K562 (cell line): ENCODE measurements at regions of chr2 and their contacts with region 1.

Region 1: GRCh38 chr2:196076778-196077568 is 8.3 kb upstream of the DNAH7 start:
- DNase-seq: no peak
- ATAC-seq: peak; percentile 46
- H3K4me3 ChIP-seq: no peak overlapping the region
- H3K27ac ChIP-seq: no peak overlapping the region
- H3K4me1 ChIP-seq: no peaks in the 10 kb centered on the region
- H3K27me3 ChIP-seq: no peaks in the 10 kb centered on the region
- CTCF ChIP-seq: no peak
- EP300 ChIP-seq: no peak
- POLR2A ChIP-seq: no peak
- RAD21 ChIP-seq: no peak

Region 2: GRCh38 chr2:196046123-196046917 is 30.7 kb before region 1 on chr2:
- CTCF ChIA-PET with region 1: no interaction called
- POLR2A ChIA-PET with region 1: no interaction called
- in situ Hi-C with region 1: no loop called
- intact Hi-C with region 1: no loop called
- DNase-seq: no peak
- ATAC-seq: peak; percentile 57
- H3K4me3 ChIP-seq: no peak overlapping the region
- H3K27ac ChIP-seq: no peak overlapping the region; the same call in 2 of the 3 replicates
- H3K4me1 ChIP-seq: no peaks in the 10 kb centered on the region; a peak in 1 of 5 replicates
- H3K27me3 ChIP-seq: no peaks in the 10 kb centered on the region
- CTCF ChIP-seq: no peak
- EP300 ChIP-seq: no peak
- POLR2A ChIP-seq: no peak
- RAD21 ChIP-seq: no peak

Region 3: DNA sequence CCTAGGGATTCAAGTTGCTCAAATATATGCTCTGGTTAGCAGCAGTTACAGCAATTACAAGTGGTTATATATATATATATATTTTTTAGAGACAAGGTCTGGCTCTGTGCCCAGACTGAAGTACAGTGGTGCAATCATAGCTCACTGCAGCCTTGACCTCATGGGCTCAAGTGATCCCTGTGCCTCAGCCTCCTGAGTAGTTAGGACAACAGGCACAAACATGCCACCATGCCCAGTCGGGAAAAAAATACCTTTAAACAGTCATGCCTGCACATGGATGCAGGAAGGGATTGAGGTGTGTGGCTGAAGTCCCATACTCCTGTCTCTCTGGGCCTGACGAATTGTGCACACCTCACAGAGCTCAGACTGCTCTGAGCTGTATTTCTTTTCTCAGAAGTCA is 11.2 kb after region 1 on chr2:
- CTCF ChIA-PET with region 1: no interaction called
- POLR2A ChIA-PET with region 1: no interaction called
- in situ Hi-C with region 1: no loop called
- intact Hi-C with region 1: no loop called
- DNase-seq: no peak
- ATAC-seq: no peak
- H3K4me3 ChIP-seq: no peak overlapping the region
- H3K27ac ChIP-seq: no peak overlapping the region
- H3K4me1 ChIP-seq: no peaks in the 10 kb centered on the region
- H3K27me3 ChIP-seq: no peaks in the 10 kb centered on the region
- CTCF ChIP-seq: no peak
- EP300 ChIP-seq: no peak
- POLR2A ChIP-seq: no peak
- RAD21 ChIP-seq: no peak

Region 4: GRCh38 chr2:196171248-196171871 is 94.4 kb after region 1 on chr2 and contains the start of gene STK17B:
- CTCF ChIA-PET with region 1: no interaction called
- POLR2A ChIA-PET with region 1: no interaction called
- in situ Hi-C with region 1: no loop called
- intact Hi-C with region 1: loop called (anchors 5 kb)
- DNase-seq: peak; percentile 93 to 97 (median 96)
- ATAC-seq: peak; percentile 87
- H3K4me3 ChIP-seq: peak within 1 kb of the TSS; percentile 87
- H3K27ac ChIP-seq: peak within 1 kb of the TSS; percentile 91
- H3K4me1 ChIP-seq: peaks cover 12 to 26% of the 10 kb centered on the region in 2 experiments; a peak in 4 of 5 replicates
- H3K27me3 ChIP-seq: no peaks in the 10 kb centered on the region
- CTCF ChIP-seq: peak in 2 of 3 experiments; percentile 21 to 28; a peak in 2 of 6 replicates
- EP300 ChIP-seq: no peak
- POLR2A ChIP-seq: peak; percentile 93
- RAD21 ChIP-seq: no peak; a peak in 1 of 4 replicates
- polyA plus RNA-seq, gene STK17B: 2.3 to 3.0 TPM

Region 5: GRCh38 chr2:196291873-196292800 is 215.2 kb after region 1 on chr2:
- CTCF ChIA-PET with region 1: no interaction called
- POLR2A ChIA-PET with region 1: no interaction called
- in situ Hi-C with region 1: no loop called
- intact Hi-C with region 1: loop called (anchors 5 kb)
- DNase-seq: no peak
- ATAC-seq: no peak
- H3K4me3 ChIP-seq: no peak overlapping the region
- H3K27ac ChIP-seq: no peak overlapping the region
- H3K4me1 ChIP-seq: no peaks in the 10 kb centered on the region
- H3K27me3 ChIP-seq: no peaks in the 10 kb centered on the region
- CTCF ChIP-seq: no peak
- EP300 ChIP-seq: no peak
- POLR2A ChIP-seq: no peak
- RAD21 ChIP-seq: no peak

Region 6: DNA sequence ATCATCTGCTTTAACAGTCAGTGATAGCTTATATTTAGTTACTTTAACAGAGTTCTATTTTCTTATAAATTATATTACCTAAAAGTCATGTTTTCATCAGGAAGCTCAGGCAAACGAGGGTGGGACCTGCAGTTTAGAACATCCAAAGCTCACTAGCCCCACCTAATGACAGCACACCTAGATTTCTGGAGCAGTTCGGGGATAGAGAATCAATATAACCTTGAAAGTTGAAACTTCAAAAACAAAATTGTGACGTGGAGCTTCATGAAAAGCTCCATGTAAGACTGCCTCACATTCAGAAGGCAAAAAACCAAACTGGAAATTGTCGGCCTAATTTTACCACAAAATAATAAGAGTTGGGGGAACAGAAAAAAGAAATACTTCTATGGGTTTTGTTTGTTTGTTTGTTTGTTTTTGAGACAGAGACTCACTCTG is 376.7 kb after region 1 on chr2:
- CTCF ChIA-PET with region 1: no interaction called
- POLR2A ChIA-PET with region 1: no interaction called
- in situ Hi-C with region 1: no loop called
- intact Hi-C with region 1: loop called (anchors 5 kb)
- DNase-seq: peak; percentile 7 to 67 (median 14)
- ATAC-seq: peak; percentile 88
- H3K4me3 ChIP-seq: no peak overlapping the region
- H3K27ac ChIP-seq: no peak overlapping the region
- H3K4me1 ChIP-seq: no peaks in the 10 kb centered on the region
- H3K27me3 ChIP-seq: no peaks in the 10 kb centered on the region
- CTCF ChIP-seq: peak; percentile 48 to 73 (median 64); a peak in 5 of 6 replicates
- EP300 ChIP-seq: no peak
- POLR2A ChIP-seq: no peak
- RAD21 ChIP-seq: peak; percentile 62 to 79